ENCODE measurements at regions of chr18 and their contacts with region 1.

Region 1: DNA sequence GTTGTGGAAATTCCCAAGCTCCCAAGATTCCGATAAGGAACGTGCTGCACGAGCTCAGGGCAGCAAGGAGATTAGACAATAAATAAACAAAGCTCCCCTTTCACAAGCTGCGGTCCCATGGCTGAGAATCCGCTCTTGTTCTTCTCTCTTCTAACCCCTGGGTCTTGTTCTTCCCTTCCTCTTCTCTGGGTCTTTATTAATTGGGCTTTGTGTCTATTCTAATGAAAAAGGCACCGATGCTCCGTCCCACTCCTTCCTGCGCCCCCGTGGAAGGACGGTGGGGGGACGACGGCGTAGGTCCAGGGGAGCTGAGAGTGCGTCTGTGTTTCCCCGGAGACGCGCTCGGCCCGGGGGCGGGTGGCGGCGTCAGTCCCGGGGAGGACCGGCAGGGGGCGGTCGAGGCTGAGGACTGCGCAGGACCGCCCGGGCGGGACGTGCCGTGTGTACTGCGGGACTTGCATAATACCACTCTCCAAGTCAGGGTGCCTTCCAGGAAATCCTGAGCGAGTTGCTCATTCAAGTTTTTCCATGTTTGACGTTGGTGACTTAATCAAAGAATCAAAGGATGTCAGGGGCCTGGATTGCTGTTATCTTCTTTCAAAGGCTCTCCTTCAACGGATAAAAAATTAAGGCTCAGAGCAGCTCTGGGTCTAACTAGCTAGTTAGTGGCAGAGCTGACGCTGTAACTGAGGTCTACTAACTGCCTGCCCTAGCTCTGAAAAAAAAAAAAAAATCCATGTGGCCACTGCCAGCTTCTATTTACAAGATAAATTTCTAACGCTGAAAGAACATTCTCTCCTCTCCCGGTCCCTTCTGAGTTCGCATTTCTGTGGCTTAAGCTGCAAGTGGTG is 321.4 kb downstream of the TGIF1 start:
- DNase-seq: peak; percentile 96
- H3K4me3 ChIP-seq: peak overlapping the region; percentile 69
- H3K27ac ChIP-seq: peak overlapping the region; percentile 63
- H3K4me1 ChIP-seq: peaks cover 5% of the 10 kb centered on the region; the same call in 1 of the 2 replicates
- H3K27me3 ChIP-seq: no peaks in the 10 kb centered on the region

Region 2: GRCh38 chr18:3710712-3711269 is 60.6 kb before region 1 on chr18:
- in situ Hi-C with region 1: loop called (anchors 10 kb)
- DNase-seq: peak; percentile 56
- H3K4me3 ChIP-seq: no peak overlapping the region
- H3K27ac ChIP-seq: no peak overlapping the region
- H3K4me1 ChIP-seq: 0 out of 2 replicates have a peak, but pooled peaks cover 11% of the 10 kb centered on the region
- H3K27me3 ChIP-seq: 0 out of 2 replicates have a peak, but pooled peaks cover 8% of the 10 kb centered on the region

Region 3: GRCh38 chr18:3821524-3821923 is 50.2 kb after region 1 on chr18:
- in situ Hi-C with region 1: no loop called
- DNase-seq: no peak
- H3K4me3 ChIP-seq: no peak overlapping the region
- H3K27ac ChIP-seq: no peak overlapping the region
- H3K4me1 ChIP-seq: peaks cover 13% of the 10 kb centered on the region
- H3K27me3 ChIP-seq: no peaks in the 10 kb centered on the region

Measured in GM23248 (cell line).